GM18951 (cell line): ENCODE measurements at regions of chr6 and their contacts with region 1.

Region 1: DNA sequence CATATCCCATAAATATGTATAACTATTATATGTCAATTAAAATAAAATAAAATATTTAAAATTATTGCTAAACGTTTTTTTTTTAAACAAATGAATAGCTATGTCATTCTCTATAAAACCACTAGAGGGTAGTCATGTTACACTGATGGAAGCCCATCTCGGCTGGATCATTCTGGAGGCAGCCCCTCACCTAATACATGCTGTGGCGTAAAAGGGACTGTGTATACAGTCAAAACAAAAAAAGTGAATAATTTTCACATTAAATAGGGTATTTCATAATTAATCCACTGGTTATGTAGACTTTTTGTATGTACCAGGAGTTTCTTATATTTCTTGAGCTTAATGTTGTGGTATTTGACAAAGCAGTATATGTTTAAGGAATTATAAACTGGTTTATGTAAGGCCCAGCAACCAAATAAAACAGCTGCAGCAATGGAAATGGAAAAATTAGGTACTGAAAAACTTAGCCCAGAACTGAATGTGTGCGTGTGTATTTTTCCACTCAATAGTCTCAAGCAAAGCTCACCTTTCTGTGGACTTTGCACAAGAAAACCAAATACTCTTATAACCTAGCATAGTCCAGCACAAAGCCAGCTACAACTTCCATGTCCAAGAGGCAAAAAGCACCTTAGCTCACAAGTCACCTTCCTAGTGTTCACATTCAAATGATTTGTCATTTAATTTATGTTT is 81.7 kb downstream of the COL9A1 start:
- POLR2A ChIP-seq: no peak

Region 2: DNA sequence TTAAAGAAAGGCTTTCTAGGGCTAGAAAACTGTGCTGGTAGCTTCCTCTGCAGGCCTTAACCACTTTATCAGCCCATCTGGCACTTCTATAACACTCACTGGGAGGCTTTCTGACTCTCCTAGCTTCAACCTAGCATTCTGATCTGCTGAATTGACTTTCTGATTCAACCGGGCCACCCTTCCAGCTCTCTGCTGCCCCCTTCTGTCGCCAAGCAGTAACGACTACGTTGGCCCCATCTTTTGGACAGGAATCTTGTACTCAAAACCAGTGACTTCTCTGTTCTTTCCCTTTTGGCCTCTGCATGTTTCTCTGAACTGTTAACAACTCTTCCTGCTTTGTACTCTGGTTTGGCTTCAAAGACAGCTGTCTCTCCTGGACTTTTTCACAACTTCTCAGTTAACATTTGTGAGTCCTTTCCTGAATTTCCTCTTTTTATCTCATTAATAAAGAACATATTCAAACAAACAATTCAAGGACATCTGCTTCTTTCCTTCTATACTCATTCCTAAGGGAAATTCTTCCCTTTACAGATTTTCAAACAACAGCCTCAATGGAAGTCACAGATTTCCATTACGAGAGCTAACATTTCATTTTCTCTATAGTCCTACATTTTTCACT is 148.3 kb after region 1 on chr6:
- in situ Hi-C with region 1: loop called (anchors 10 kb)
- POLR2A ChIP-seq: no peak